H1 (cell line): ENCODE measurements at regions of chr3 and their contacts with region 1.

Region 1: DNA sequence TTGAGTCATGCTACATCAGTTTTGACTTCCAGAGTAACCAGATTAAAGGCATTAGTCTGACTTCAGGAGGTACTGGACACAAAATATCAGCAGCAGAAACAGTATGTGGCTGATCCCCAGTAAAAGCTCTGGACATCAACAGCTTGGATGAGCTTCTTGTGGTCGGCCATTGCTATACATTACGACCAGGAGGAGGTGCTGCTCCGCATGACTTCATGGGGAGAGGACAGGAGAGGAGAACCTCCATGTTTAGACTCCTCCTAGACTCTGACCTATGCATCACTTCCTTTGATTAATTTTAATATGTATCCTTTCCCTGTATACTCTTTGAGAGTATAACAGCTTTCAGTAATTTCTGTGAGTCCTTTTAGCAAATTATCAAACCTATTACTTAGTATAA is 285.6 kb upstream of the ARHGEF26 start:
- DNase-seq: no peak
- H3K4me3 ChIP-seq: no peak overlapping the region
- H3K27ac ChIP-seq: no peak overlapping the region
- H3K4me1 ChIP-seq: no peaks in the 10 kb centered on the region
- H3K27me3 ChIP-seq: no peaks in the 10 kb centered on the region
- CTCF ChIP-seq: peak; percentile 41 to 57 (median 50)
- EP300 ChIP-seq: no peak
- POLR2A ChIP-seq: no peak
- RAD21 ChIP-seq: peak; percentile 43 to 51; a peak in 3 of 4 replicates

Region 2: GRCh38 chr3:153848702-153849101 is 13.2 kb after region 1 on chr3:
- CTCF ChIA-PET with region 1: interaction called, 18 read pairs
- POLR2A ChIA-PET with region 1: no interaction called
- DNase-seq: no peak
- H3K4me3 ChIP-seq: no peak overlapping the region
- H3K27ac ChIP-seq: no peak overlapping the region
- H3K4me1 ChIP-seq: 0 out of 7 replicates have a peak, but pooled peaks cover 0 to 2% (median 0%) of the 10 kb centered on the region in 4 experiments
- H3K27me3 ChIP-seq: no peaks in the 10 kb centered on the region
- CTCF ChIP-seq: no peak
- EP300 ChIP-seq: no peak
- POLR2A ChIP-seq: no peak
- RAD21 ChIP-seq: no peak

Region 3: DNA sequence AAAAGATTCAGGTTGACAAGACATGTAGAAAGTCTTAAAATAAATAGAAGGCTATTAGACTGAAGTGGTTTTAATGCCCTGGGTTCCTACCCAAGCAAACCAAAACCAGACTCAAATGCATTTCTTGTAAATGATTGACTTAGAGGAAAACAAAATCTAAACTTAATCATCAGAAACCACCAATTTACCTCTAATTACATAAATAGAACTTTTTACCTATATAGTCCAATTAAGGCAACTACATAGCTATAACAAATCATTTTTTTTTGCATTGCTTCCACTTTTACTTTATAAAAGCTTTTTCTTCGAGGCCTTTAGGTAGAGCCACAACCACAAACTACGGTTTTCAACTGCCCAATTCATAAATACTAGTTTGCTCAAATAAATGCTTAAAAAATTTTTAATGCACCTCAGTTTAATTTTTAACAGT is 54.4 kb after region 1 on chr3:
- CTCF ChIA-PET with region 1: no interaction called
- POLR2A ChIA-PET with region 1: no interaction called
- DNase-seq: no peak
- H3K4me3 ChIP-seq: no peak overlapping the region
- H3K27ac ChIP-seq: no peak overlapping the region
- H3K4me1 ChIP-seq: no peaks in the 10 kb centered on the region
- H3K27me3 ChIP-seq: no peaks in the 10 kb centered on the region
- CTCF ChIP-seq: no peak
- EP300 ChIP-seq: no peak
- POLR2A ChIP-seq: no peak
- RAD21 ChIP-seq: no peak